GM12878 (cell line): ENCODE measurements at regions of chrX and their contacts with region 1.

Region 1: GRCh38 chrX:49019599-49020249 is 17.7 kb upstream of the GRIPAP1 start:
- DNase-seq: no peak
- ATAC-seq: no peak
- H3K4me3 ChIP-seq: no peak overlapping the region
- H3K27ac ChIP-seq: no peak overlapping the region
- H3K4me1 ChIP-seq: no peaks in the 10 kb centered on the region; the same call in 1 of the 2 replicates
- H3K27me3 ChIP-seq: no peaks in the 10 kb centered on the region
- CTCF ChIP-seq: no peak
- EP300 ChIP-seq: no peak
- POLR2A ChIP-seq: no peak
- RAD21 ChIP-seq: no peak

Region 2: GRCh38 chrX:48917139-48918001 is 102.4 kb before region 1 on chrX:
- CTCF ChIA-PET with region 1: no interaction called
- POLR2A ChIA-PET with region 1: interaction called, 10 read pairs
- RAD21 ChIA-PET with region 1: no interaction called
- SMC1A ChIA-PET with region 1: no interaction called
- in situ Hi-C with region 1: no loop called
- intact Hi-C with region 1: no loop called
- DNase-seq: peak; percentile 88
- ATAC-seq: peak; percentile 62
- H3K4me3 ChIP-seq: peak overlapping the region; percentile 65
- H3K27ac ChIP-seq: peak overlapping the region; percentile 83
- H3K4me1 ChIP-seq: peaks cover 9% of the 10 kb centered on the region
- H3K27me3 ChIP-seq: no peaks in the 10 kb centered on the region
- CTCF ChIP-seq: peak; percentile 86 to 97 (median 91)
- EP300 ChIP-seq: peak in 1 of 2 experiments; percentile 67; a peak in 2 of 4 replicates
- POLR2A ChIP-seq: peak; percentile 67
- RAD21 ChIP-seq: peak; percentile 55